Activated B cell treated with CpG ODN at 0.5 μM for 24 hours (primary cell): ENCODE measurements at regions of chr14 and their contacts with region 1.

Region 1: DNA sequence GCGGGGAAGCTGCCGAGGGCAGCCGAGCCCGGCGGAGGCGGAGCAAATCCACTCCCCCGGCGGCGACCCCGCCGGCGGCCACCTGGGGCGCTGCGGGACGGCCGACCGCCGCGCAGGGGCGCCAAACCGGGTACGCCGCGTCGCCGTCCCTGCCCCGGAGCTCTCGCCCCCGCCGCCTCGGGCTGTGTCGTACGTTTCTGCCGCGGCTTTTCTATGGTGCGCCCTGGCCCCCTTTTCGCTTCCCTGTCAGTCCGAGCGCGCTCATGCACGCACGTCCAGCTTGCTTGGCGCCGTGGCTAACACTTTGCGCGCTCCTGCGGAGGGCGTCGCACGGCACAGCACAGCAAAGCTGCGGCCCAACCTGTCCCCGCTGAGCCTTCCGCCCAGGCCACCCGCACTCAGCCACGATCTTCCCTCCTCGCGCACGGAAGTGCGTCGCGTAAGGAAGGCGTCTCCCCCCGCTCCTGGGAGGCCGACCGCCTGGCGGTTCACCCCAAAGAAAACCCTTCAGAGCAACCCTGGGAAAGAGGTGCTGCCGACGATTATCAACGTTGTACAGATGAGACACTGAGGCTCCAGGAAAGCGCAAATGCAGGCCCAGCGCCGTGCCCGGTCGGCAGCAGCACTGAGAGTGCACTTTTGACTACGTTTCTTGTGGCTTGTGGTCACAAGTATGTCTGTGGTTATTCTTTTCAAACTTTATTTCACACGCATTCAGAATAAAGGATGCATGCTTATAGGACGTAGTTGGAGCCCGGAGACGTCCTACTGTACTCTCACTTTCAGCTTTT is at the start of gene HECTD1:
- DNase-seq: no peak
- ATAC-seq: peak; percentile 82
- H3K4me3 Mint-ChIP-seq: peak within 1 kb of the TSS; percentile 96
- H3K27ac Mint-ChIP-seq: peak within 1 kb of the TSS; percentile 99
- H3K4me1 Mint-ChIP-seq: peaks cover 39% of the 10 kb centered on the region
- H3K27me3 Mint-ChIP-seq: no peaks in the 10 kb centered on the region
- CTCF ChIP-seq: no peak
- total RNA-seq, gene HECTD1: 139 and 163 TPM in 2 replicates

Region 2: GRCh38 chr14:30558675-30559555 is 649.0 kb before region 1 on chr14 and contains the start of gene G2E3:
- CTCF ChIA-PET with region 1: no interaction called
- POLR2A ChIA-PET with region 1: no interaction called
- intact Hi-C with region 1: loop called (anchors 2 kb)
- DNase-seq: peak; percentile 88
- ATAC-seq: peak; percentile 99
- H3K4me3 Mint-ChIP-seq: peak within 1 kb of the TSS; percentile 100
- H3K27ac Mint-ChIP-seq: peak within 1 kb of the TSS; percentile 98
- H3K4me1 Mint-ChIP-seq: peaks cover 29% of the 10 kb centered on the region
- H3K27me3 Mint-ChIP-seq: no peaks in the 10 kb centered on the region
- CTCF ChIP-seq: no peak
- total RNA-seq, gene G2E3: 23.5 and 32.6 TPM in 2 replicates

Region 3: DNA sequence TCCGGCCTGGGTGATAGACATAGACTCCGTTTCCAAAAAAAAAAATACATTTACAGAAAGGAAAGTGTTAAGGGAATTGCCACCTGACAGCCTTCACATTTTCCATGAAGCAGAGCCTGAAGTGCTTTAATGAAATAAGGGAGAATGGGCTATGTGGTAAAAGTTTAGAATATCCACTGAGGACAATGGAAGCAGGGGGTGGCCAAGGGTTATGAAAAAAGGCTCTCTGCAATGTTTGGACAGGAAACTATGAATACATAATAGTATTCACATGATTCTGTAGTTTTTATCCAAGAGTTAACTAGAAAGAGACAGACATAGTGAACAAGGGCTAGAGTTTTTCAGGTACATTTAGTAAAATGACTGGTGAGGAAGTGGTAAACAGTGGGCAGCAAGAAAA is 258.3 kb before region 1 on chr14:
- CTCF ChIA-PET with region 1: no interaction called
- POLR2A ChIA-PET with region 1: no interaction called
- intact Hi-C with region 1: no loop called
- DNase-seq: no peak
- ATAC-seq: no peak
- H3K4me3 Mint-ChIP-seq: no peak overlapping the region
- H3K27ac Mint-ChIP-seq: no peak overlapping the region
- H3K4me1 Mint-ChIP-seq: no peaks in the 10 kb centered on the region
- H3K27me3 Mint-ChIP-seq: no peaks in the 10 kb centered on the region
- CTCF ChIP-seq: no peak

Region 4: DNA sequence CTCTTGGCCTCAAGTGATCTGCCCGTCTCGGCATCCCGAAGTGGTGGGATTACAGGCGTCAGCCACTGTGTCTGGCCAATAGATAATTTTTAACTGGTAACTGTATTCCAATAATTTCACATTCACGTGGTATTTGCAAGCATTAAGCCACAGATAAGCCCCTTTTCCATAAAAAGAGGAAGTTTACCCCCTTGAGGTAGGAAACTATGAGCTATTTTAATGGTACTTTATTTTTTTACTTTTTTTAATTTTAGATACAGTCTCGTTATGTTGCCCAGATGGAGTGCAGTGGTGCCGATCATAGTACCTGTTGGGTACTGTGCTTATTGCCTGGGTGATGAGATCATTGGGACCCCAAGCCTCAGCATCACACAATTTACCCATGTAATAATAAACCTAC is 225.4 kb before region 1 on chr14:
- CTCF ChIA-PET with region 1: no interaction called
- POLR2A ChIA-PET with region 1: interaction called, 4 read pairs
- intact Hi-C with region 1: loop called (anchors 5 kb)
- DNase-seq: no peak
- ATAC-seq: peak; percentile 74
- H3K4me3 Mint-ChIP-seq: no peak overlapping the region
- H3K27ac Mint-ChIP-seq: peak overlapping the region; percentile 53
- H3K4me1 Mint-ChIP-seq: peaks cover 53% of the 10 kb centered on the region
- H3K27me3 Mint-ChIP-seq: no peaks in the 10 kb centered on the region
- CTCF ChIP-seq: no peak

Region 5: DNA sequence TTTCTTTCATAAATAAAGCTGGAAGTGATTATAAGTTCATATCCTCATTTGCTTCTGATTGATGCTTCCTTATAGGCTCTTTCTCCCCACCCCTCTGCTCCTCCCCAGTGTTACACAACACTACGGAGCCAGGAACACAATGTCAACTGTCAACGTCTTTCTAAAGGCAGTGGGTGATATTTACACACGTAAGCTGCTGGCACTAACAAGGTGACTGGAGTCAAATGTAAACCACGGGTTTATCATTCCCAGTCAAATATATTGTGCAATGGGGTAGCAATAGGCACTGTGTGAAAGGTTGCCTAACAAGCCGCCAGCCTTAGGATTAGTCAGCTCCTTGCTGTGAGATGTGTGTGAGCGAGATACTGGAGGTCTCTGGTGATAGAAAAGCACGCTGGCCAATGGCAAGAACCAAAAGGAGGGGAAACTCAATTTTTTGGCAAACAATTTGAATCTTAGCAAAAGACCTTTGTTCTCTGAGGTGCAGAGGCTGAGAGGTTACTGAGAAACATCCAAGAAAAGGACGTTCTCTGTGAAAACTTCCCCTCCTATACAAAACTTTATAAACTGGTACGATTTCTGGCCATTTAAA is 21.8 kb after region 1 on chr14:
- CTCF ChIA-PET with region 1: interaction called, 7 read pairs
- POLR2A ChIA-PET with region 1: interaction called, 14 read pairs
- intact Hi-C with region 1: no loop called
- DNase-seq: no peak
- ATAC-seq: no peak
- H3K4me3 Mint-ChIP-seq: no peak overlapping the region
- H3K27ac Mint-ChIP-seq: no peak overlapping the region
- H3K4me1 Mint-ChIP-seq: peaks cover 5% of the 10 kb centered on the region
- H3K27me3 Mint-ChIP-seq: no peaks in the 10 kb centered on the region
- CTCF ChIP-seq: no peak

Region 6: DNA sequence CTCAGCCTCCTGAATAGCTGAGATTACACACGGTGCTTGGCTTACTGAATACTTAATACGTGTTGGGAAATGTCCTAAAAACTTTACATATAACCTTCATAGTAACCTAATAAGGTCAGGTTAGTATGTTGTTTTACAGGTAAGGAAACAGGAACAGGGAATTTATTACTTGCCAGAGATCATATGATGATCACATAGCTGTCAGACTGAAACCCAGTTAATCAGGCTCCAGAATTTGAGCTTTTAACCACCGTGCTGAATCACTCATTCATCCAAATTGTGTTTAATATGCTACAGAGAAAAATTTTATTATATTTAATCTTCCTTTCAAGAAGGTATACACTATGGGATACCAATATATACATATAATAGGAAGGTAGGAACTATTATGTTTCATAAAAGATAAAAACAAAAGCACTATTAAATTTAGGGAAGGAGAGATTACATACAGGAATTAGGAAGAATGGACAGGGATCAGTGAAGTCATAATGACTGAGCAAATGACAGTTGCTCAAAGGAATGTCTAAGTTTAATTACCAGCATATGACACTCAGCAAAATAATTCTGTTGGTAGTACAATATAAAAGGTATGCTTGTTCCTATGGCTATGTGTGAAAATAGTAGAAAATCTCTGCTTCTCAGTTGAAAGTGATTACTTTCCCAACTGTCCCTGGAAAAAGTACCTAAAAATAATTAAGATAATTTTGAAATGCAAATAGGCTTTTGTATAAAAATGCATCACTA is 153.1 kb after region 1 on chr14:
- CTCF ChIA-PET with region 1: interaction called, 3 read pairs
- POLR2A ChIA-PET with region 1: interaction called, 5 read pairs
- intact Hi-C with region 1: loop called (anchors 1 kb)
- DNase-seq: no peak
- ATAC-seq: no peak
- H3K4me3 Mint-ChIP-seq: no peak overlapping the region
- H3K27ac Mint-ChIP-seq: no peak overlapping the region
- H3K4me1 Mint-ChIP-seq: peaks cover 5% of the 10 kb centered on the region
- H3K27me3 Mint-ChIP-seq: no peaks in the 10 kb centered on the region
- CTCF ChIP-seq: no peak

Region 7: DNA sequence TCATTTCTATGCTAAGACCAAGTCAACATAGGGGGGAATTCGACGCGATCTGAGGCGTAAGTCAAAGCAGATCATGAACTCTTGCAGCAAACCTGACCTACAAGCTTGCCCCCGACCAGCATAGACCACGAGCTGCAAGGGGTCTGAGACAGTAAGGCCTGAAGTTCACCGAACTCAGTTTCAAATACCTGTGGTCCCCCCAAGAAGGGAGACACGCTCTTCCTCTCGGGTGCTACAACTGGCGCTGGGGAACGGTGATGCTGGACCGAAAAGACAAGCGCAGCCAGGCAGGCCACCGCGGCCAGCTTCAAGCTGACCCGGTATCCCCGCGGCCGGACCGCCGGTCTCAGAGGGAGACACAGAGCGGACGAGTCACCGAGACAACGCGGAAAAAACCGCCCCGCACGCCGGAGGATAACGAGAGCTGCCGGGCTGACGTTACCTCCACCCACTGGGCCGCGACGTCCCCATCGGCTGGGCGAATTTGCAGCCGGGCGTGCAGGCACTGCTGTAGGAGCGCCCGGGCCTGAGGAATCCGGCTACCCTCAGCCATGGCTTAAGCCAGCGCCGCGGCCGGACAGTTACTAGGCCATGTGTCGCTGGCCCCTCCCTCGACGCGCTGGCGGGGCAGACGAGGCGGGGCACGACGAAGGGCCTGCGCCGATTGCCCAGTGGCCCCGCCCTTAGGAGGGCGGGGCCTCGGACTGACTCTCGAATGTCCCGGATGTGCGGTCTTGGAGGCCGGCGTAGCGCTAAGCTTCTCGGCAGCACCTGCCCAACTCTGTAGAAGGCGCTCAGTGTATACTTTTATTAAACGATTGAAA is 249.1 kb after region 1 on chr14 and contains the start of gene DTD2:
- CTCF ChIA-PET with region 1: no interaction called
- POLR2A ChIA-PET with region 1: interaction called, 9 read pairs
- intact Hi-C with region 1: loop called (anchors 1 kb)
- DNase-seq: peak; percentile 82
- ATAC-seq: peak; percentile 98
- H3K4me3 Mint-ChIP-seq: peak within 1 kb of the TSS; percentile 99
- H3K27ac Mint-ChIP-seq: peak within 1 kb of the TSS; percentile 96
- H3K4me1 Mint-ChIP-seq: peaks cover 31% of the 10 kb centered on the region
- H3K27me3 Mint-ChIP-seq: no peaks in the 10 kb centered on the region
- CTCF ChIP-seq: no peak
- total RNA-seq, gene DTD2: 19.8 and 21.3 TPM in 2 replicates

Region 8: GRCh38 chr14:32202998-32203882 is 995.3 kb after region 1 on chr14 and contains the start of gene RNU6-8:
- CTCF ChIA-PET with region 1: no interaction called
- POLR2A ChIA-PET with region 1: no interaction called
- intact Hi-C with region 1: loop called (anchors 1 kb)
- DNase-seq: peak; percentile 84
- ATAC-seq: peak; percentile 78
- H3K4me3 Mint-ChIP-seq: peak within 1 kb of the TSS; percentile 87
- H3K27ac Mint-ChIP-seq: peak within 1 kb of the TSS; percentile 100
- H3K4me1 Mint-ChIP-seq: peaks cover 51% of the 10 kb centered on the region
- H3K27me3 Mint-ChIP-seq: no peaks in the 10 kb centered on the region
- CTCF ChIP-seq: no peak
- total RNA-seq, gene RNU6-8: not detected in 2 replicates